ENCODE measurements at regions of chr13 and their contacts with region 1.

Region 1: DNA sequence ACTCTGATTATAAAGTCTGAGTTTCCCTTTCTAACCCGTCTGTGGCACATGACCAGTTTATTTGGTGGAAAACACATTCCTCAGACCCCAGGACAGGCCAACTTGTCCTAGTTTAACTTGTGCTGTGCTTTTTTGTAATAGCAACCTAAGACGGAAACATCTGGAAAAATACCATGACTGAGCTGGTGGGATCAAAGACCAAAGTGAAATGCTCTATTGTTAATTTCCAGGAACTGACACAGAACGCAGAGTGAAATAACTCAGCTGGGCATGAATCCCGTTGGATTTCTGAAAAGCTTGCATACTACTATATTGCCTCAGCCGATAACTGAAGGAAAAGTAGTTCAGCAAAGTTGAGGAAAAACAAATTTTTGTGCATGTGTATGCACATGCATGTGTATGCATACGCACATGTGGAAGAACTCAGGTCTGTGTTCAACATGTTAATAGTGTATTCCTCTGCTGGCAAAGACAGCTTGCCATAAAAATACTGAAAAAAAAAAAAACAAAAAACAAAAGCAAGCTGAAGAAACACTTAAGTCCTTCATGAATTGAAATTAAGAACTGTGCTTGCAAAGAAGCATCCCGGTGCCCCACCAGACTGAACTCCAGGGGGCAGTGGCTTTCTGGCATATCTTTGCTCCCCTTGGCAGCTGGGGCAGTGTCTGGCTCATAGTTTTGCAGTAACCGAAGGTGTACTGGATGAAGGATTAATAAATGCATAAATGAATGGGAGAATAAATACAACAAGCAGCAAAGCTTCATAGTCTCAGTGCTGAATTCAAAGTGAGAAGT is 187.8 kb downstream of the LHFPL6 start:
- DNase-seq: peak in 1 of 2 donors; percentile 73
- H3K4me3 ChIP-seq: peak overlapping the region; percentile 28 to 40
- H3K27ac ChIP-seq: peak overlapping the region; percentile 45 to 62
- H3K4me1 ChIP-seq: peaks cover 0 to 29% of the 10 kb centered on the region in 2 donors
- H3K27me3 ChIP-seq: no peaks in the 10 kb centered on the region
- CTCF ChIP-seq: peak in 2 of 3 experiments; percentile 5 to 53

Region 2: GRCh38 chr13:39037880-39038568 is 377.2 kb before region 1 on chr13 and contains the starts of genes NHLRC3 and PROSER1:
- intact Hi-C with region 1: loop called (anchors 10 kb)
- DNase-seq: peak; percentile 76 to 97
- H3K4me3 ChIP-seq: peak within 1 kb of the TSS; percentile 97 to 100
- H3K27ac ChIP-seq: peak within 1 kb of the TSS; percentile 78 to 88
- H3K4me1 ChIP-seq: peaks cover 0 to 16% of the 10 kb centered on the region in 2 donors
- H3K27me3 ChIP-seq: no peaks in the 10 kb centered on the region
- CTCF ChIP-seq: no peak
- total RNA-seq, gene NHLRC3: 7.1 TPM
- total RNA-seq, gene PROSER1: 60.7 TPM

Region 3: DNA sequence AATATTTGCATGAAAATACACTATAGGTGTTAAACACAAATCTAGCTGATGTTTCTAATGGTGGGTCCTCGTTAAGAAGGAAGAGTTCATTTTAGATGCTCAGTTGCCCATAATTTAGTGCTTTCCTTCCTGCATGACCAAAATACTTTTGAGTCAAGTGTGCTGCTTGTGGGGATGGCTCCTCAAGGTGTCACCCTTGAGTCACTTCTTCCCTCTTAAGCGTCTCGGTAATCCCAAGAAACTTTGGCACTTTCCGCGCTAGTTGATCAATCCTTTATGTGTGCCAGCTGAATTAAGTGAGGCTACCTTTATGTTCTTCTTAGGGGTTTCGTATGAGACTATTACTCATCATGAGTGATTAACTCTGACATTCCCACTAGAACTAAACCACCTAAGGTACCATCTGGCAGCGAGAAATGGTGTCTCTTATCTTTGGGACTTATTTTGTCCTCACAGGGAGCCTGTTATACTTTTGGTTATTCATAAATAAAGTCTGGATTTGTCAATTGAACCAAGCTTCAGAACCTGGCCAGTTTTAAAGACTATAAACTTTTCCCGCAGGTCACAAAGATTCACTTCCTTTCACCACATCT is 270.2 kb before region 1 on chr13:
- intact Hi-C with region 1: loop called (anchors 10 kb)
- DNase-seq: peak in 1 of 2 donors; percentile 77
- H3K4me3 ChIP-seq: peak overlapping the region; percentile 2 to 57
- H3K27ac ChIP-seq: no peak overlapping the region
- H3K4me1 ChIP-seq: peaks cover 0 to 3% of the 10 kb centered on the region in 2 donors
- H3K27me3 ChIP-seq: no peaks in the 10 kb centered on the region
- CTCF ChIP-seq: peak; percentile 45 to 84 (median 79)

Region 4: GRCh38 chr13:39186205-39186875 is 228.9 kb before region 1 on chr13:
- intact Hi-C with region 1: loop called (anchors 5 kb)
- DNase-seq: no peak
- H3K4me3 ChIP-seq: peak overlapping the region in 1 of 2 donors; percentile 17
- H3K27ac ChIP-seq: peak overlapping the region in 1 of 2 donors; percentile 55
- H3K4me1 ChIP-seq: peaks cover 0 to 5% of the 10 kb centered on the region in 2 donors
- H3K27me3 ChIP-seq: no peaks in the 10 kb centered on the region
- CTCF ChIP-seq: no peak

Region 5: GRCh38 chr13:39527961-39528660 is 112.9 kb after region 1 on chr13:
- intact Hi-C with region 1: loop called (anchors 5 kb)
- DNase-seq: peak in 1 of 2 donors; percentile 82
- H3K4me3 ChIP-seq: peak overlapping the region in 1 of 2 donors; percentile 41
- H3K27ac ChIP-seq: peak overlapping the region; percentile 59 to 70
- H3K4me1 ChIP-seq: peaks cover 6 to 36% of the 10 kb centered on the region in 2 donors
- H3K27me3 ChIP-seq: no peaks in the 10 kb centered on the region
- CTCF ChIP-seq: no peak

Region 6: GRCh38 chr13:39602614-39603366 is 187.6 kb after region 1 on chr13 and contains the start of gene LHFPL6:
- intact Hi-C with region 1: loop called (anchors 1 kb)
- DNase-seq: peak; percentile 35 to 90
- H3K4me3 ChIP-seq: peak within 1 kb of the TSS; percentile 82 to 92
- H3K27ac ChIP-seq: peak within 1 kb of the TSS; percentile 83 to 85
- H3K4me1 ChIP-seq: peaks cover 3 to 9% of the 10 kb centered on the region in 2 donors
- H3K27me3 ChIP-seq: no peaks in the 10 kb centered on the region
- CTCF ChIP-seq: peak in 2 of 3 experiments; percentile 25 to 29
- total RNA-seq, gene LHFPL6: 69.4 TPM